AG04449 (cell line): ENCODE measurements at regions of chr2 and their contacts with region 1.

Region 1: GRCh38 chr2:134118279-134119116 is 135.4 kb upstream of the MGAT5 start:
- DNase-seq: peak; percentile 94
- H3K4me3 ChIP-seq: no peak overlapping the region
- CTCF ChIP-seq: peak; percentile 68

Region 2: GRCh38 chr2:133690780-133691179 is 427.7 kb before region 1 on chr2:
- CTCF ChIA-PET with region 1: no interaction called
- POLR2A ChIA-PET with region 1: no interaction called
- DNase-seq: no peak
- H3K4me3 ChIP-seq: no peak overlapping the region
- CTCF ChIP-seq: no peak

Region 3: GRCh38 chr2:134039912-134040581 is 78.5 kb before region 1 on chr2:
- CTCF ChIA-PET with region 1: no interaction called
- POLR2A ChIA-PET with region 1: no interaction called
- DNase-seq: no peak
- H3K4me3 ChIP-seq: no peak overlapping the region
- CTCF ChIP-seq: no peak

Region 4: DNA sequence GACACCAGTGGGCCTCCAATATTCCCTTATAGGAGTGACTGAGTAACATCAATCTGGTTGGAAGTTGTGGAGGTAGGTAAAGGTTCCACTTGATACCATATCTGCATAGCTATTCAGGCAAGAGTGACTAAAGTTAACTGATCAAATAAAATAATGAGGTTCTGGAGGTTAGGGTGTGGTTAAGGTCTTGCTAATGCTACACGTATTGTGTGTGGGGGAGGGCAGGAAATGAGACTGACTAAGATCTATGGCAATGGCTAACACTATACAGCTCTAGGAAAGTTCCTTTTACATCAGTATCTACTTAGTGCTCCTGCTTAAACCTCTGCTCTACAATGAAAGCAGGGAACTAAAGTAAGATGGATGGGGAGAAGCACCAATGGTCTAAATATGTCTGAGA is 13.7 kb before region 1 on chr2:
- CTCF ChIA-PET with region 1: interaction called, 14 read pairs
- POLR2A ChIA-PET with region 1: no interaction called
- DNase-seq: no peak
- H3K4me3 ChIP-seq: no peak overlapping the region
- CTCF ChIP-seq: no peak

Region 5: GRCh38 chr2:134218930-134219658 is 100.6 kb after region 1 on chr2:
- CTCF ChIA-PET with region 1: interaction called, 12 read pairs
- POLR2A ChIA-PET with region 1: no interaction called
- DNase-seq: no peak
- H3K4me3 ChIP-seq: no peak overlapping the region
- CTCF ChIP-seq: no peak

Region 6: DNA sequence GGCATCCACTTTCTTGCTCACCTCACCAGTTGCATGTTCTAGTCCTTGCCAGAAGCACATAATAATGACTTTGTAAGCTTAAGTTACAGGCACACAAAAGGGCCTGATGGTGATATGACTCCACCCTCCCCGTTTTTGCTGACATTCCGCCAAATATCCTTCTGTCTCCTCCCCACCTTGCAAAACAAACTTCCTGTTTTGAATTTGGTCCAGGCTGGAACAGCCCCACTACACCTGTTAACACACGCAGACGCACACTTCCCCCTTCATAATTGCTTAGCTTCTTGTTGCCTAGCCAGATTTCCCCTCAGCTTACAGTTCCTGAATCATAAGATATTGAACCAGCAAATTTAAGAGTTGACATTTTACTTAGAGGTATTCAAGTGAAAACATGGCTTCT is 135.3 kb after region 1 on chr2 and contains the start of gene MGAT5:
- CTCF ChIA-PET with region 1: interaction called, 28 read pairs
- POLR2A ChIA-PET with region 1: interaction called, 3 read pairs
- DNase-seq: no peak
- H3K4me3 ChIP-seq: no peak within 1 kb of the TSS
- CTCF ChIP-seq: no peak

Region 7: DNA sequence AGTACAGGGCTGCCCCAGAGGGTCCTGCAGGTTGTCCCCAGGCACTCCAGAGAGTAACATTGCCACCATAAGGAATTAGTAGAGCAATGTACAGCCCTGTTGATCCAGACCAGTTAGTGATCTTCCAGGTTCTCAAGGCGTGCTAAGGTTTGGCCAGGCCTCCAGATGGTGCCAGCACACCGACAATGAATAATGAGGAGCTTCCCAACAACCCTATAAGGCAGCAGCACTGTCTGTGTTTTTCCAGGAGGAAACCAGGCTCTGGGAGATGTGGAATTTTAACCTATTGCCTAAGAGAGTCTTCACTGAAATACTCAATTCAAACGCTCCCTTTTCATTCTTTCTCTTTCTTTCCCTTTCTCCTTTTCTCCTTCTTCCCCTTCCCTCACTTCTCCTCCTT is 257.4 kb after region 1 on chr2:
- CTCF ChIA-PET with region 1: interaction called, 27 read pairs
- POLR2A ChIA-PET with region 1: no interaction called
- DNase-seq: no peak
- H3K4me3 ChIP-seq: no peak overlapping the region
- CTCF ChIP-seq: peak; percentile 70

Region 8: DNA sequence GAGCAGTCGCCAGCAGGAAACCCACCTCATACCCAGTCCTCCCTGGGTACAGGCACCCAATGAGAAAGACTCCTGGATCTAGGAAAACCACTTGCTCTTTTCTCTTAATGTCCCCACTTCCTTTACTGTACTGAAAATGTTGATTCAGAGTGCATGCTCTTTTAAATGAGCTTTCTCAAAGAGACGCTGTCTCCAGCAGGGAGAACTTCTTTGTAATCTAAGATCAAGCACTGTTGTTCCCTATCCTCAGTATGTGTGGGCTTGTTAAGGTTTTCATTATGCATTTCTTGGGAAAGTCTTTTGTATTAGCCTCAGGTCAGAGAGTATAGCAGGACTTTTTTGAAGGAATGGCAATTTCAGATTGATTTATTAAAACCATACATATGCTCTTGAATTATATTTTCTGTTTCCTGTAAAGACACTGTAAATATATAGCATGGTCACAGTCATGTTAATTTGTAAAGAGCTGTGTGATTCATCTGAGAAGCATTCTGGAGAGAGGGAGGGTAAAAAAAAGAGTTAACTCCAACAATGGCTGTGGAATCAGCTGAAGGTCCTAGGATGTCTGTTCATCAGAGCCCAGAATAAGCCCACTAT is 313.4 kb after region 1 on chr2:
- CTCF ChIA-PET with region 1: interaction called, 10 read pairs
- POLR2A ChIA-PET with region 1: no interaction called
- DNase-seq: no peak
- H3K4me3 ChIP-seq: no peak overlapping the region
- CTCF ChIP-seq: no peak